Endothelial cell of umbilical vein (primary cell): ENCODE measurements at regions of chr12 and their contacts with region 1.

Region 1: GRCh38 chr12:64222009-64222765 is at the start of gene KICS2:
- DNase-seq: peak; percentile 95
- H3K4me3 ChIP-seq: peak within 1 kb of the TSS; percentile 50 to 80 (median 67)
- H3K27ac ChIP-seq: peak within 1 kb of the TSS; percentile 80
- H3K4me1 ChIP-seq: peaks cover 7% of the 10 kb centered on the region
- H3K27me3 ChIP-seq: no peaks in the 10 kb centered on the region
- CTCF ChIP-seq: no peak
- POLR2A ChIP-seq: peak; percentile 67
- total RNA-seq, gene KICS2: 3.2 and 3.8 TPM in 2 replicates

Region 2: GRCh38 chr12:63897931-63898330 is 324.3 kb before region 1 on chr12:
- CTCF ChIA-PET with region 1: no interaction called
- POLR2A ChIA-PET with region 1: no interaction called
- dilution Hi-C with region 1: no loop called
- intact Hi-C with region 1: loop called (anchors 5 kb)
- DNase-seq: peak; percentile 92
- H3K4me3 ChIP-seq: peak overlapping the region in 1 of 3 experiments; percentile 63
- H3K27ac ChIP-seq: peak overlapping the region; percentile 96
- H3K4me1 ChIP-seq: peaks cover 16% of the 10 kb centered on the region
- H3K27me3 ChIP-seq: no peaks in the 10 kb centered on the region
- CTCF ChIP-seq: no peak
- POLR2A ChIP-seq: no peak

Region 3: GRCh38 chr12:64088431-64089349 is 133.5 kb before region 1 on chr12:
- CTCF ChIA-PET with region 1: interaction called, 4 read pairs
- POLR2A ChIA-PET with region 1: no interaction called
- dilution Hi-C with region 1: no loop called
- intact Hi-C with region 1: loop called (anchors 1 kb)
- DNase-seq: peak; percentile 92
- H3K4me3 ChIP-seq: peak overlapping the region in 2 of 3 experiments; percentile 7 to 52
- H3K27ac ChIP-seq: peak overlapping the region; percentile 71
- H3K4me1 ChIP-seq: peaks cover 18% of the 10 kb centered on the region
- H3K27me3 ChIP-seq: no peaks in the 10 kb centered on the region
- CTCF ChIP-seq: no peak
- POLR2A ChIP-seq: peak; percentile 73

Region 4: DNA sequence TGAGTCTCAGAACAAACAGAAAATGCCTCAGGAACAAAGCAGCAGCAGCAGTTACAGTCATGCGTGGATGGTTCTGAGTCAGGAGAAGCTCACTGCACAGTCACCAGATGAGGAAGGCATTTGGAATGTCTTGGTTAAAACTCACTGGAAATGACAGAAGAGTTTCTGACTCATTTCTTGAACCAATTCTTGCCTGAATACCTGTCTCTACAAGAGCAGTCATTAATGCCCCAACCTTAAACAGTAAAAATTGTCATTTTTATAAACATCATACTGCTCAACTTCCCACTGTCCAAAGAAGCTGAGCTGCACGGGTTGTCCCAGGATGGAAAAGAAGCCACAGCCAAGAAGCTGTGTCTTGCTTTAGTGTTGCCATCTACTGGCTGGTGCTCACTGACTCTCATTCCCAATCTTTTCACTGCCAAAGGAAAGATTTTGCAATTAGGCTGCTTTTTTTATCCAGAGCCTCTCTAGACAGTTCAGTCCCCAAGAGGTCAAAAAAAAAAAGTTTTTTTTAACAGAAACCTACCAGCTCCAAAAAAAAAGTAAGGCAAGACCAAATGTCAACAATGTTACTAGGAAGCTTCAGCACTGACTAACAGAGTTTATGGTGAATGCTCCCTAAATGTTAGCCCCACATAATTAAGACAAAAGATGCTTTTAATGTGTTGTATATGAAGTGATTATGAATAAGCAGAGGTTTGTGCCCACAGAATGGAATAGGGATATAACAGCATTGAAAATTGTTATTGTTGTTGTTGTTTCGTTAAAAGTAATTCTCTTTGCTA is 40.5 kb before region 1 on chr12:
- CTCF ChIA-PET with region 1: interaction called, 5 read pairs
- POLR2A ChIA-PET with region 1: no interaction called
- dilution Hi-C with region 1: no loop called
- intact Hi-C with region 1: loop called (anchors 1 kb)
- DNase-seq: peak; percentile 87
- H3K4me3 ChIP-seq: peak overlapping the region in 1 of 3 experiments; percentile 30
- H3K27ac ChIP-seq: peak overlapping the region; percentile 85
- H3K4me1 ChIP-seq: peaks cover 53% of the 10 kb centered on the region
- H3K27me3 ChIP-seq: no peaks in the 10 kb centered on the region
- CTCF ChIP-seq: peak; percentile 24 to 57
- POLR2A ChIP-seq: no peak

Region 5: DNA sequence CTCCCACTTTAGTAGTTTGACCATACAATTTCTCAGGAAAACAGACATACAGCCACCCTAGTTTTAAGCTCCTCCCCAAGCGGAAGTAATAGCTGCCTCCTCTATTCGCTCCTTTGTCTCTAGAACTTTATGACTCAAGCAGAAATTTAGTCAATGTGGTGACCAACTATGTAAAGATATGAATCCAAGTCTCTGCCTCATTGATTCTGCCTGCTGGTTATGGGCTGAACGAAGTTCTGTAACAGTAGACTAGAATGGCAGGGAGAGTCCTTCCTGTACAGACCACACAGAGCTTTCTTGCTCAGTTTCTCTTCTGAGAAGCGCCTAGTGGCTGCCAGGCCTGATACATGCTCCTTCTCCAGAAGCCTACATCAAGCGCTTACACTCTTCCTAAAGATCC is 19.2 kb before region 1 on chr12:
- CTCF ChIA-PET with region 1: interaction called, 6 read pairs
- POLR2A ChIA-PET with region 1: no interaction called
- dilution Hi-C with region 1: no loop called
- intact Hi-C with region 1: loop called (anchors 2 kb)
- DNase-seq: no peak
- H3K4me3 ChIP-seq: no peak overlapping the region
- H3K27ac ChIP-seq: no peak overlapping the region
- H3K4me1 ChIP-seq: no peaks in the 10 kb centered on the region
- H3K27me3 ChIP-seq: no peaks in the 10 kb centered on the region
- CTCF ChIP-seq: no peak
- POLR2A ChIP-seq: no peak

Region 6: GRCh38 chr12:64403707-64404469 is 181.7 kb after region 1 on chr12 and contains the start of gene XPOT:
- CTCF ChIA-PET with region 1: no interaction called
- POLR2A ChIA-PET with region 1: no interaction called
- dilution Hi-C with region 1: no loop called
- intact Hi-C with region 1: loop called (anchors 2 kb)
- DNase-seq: peak; percentile 97
- H3K4me3 ChIP-seq: peak within 1 kb of the TSS; percentile 55 to 100 (median 78)
- H3K27ac ChIP-seq: peak within 1 kb of the TSS; percentile 89
- H3K4me1 ChIP-seq: peaks cover 10% of the 10 kb centered on the region
- H3K27me3 ChIP-seq: no peaks in the 10 kb centered on the region
- CTCF ChIP-seq: peak in 1 of 2 donors; percentile 16
- POLR2A ChIP-seq: peak; percentile 97
- total RNA-seq, gene XPOT: 88.9 and 93.0 TPM in 2 replicates